Heart right ventricle (tissue), 16 donors: ENCODE measurements at regions of chr9 and their contacts with region 1.

Region 1: GRCh38 chr9:15873569-15874177 is 320.8 kb downstream of the CCDC171 start:
- DNase-seq: no peak
- ATAC-seq: no peak
- H3K4me3 ChIP-seq: no peak overlapping the region
- H3K27ac ChIP-seq: no peak overlapping the region
- H3K4me1 ChIP-seq: no peaks in the 10 kb centered on the region
- H3K27me3 ChIP-seq: no peaks in the 10 kb centered on the region
- CTCF ChIP-seq: peak; percentile 34 to 84 (median 72)

Region 2: GRCh38 chr9:15936306-15936921 is 62.7 kb after region 1 on chr9:
- intact Hi-C with region 1: no loop called
- DNase-seq: peak in 1 of 2 donors; percentile 18
- ATAC-seq: peak in 7 of 8 donors; percentile 58 to 89 (median 85)
- H3K4me3 ChIP-seq: no peak overlapping the region
- H3K27ac ChIP-seq: peak overlapping the region in 2 of 10 donors; percentile 10 to 17
- H3K4me1 ChIP-seq: peaks cover 0 to 5% (median 0%) of the 10 kb centered on the region in 9 donors
- H3K27me3 ChIP-seq: no peaks in the 10 kb centered on the region
- CTCF ChIP-seq: no peak

Region 3: GRCh38 chr9:16121601-16122286 is 248.1 kb after region 1 on chr9:
- intact Hi-C with region 1: loop called in 1 of 10 experiments (anchors 5 kb)
- DNase-seq: no peak
- ATAC-seq: no peak
- H3K4me3 ChIP-seq: no peak overlapping the region
- H3K27ac ChIP-seq: no peak overlapping the region
- H3K4me1 ChIP-seq: no peaks in the 10 kb centered on the region
- H3K27me3 ChIP-seq: no peaks in the 10 kb centered on the region
- CTCF ChIP-seq: no peak